K562 (cell line): ENCODE measurements at regions of chr5 and their contacts with region 1.

Region 1: DNA sequence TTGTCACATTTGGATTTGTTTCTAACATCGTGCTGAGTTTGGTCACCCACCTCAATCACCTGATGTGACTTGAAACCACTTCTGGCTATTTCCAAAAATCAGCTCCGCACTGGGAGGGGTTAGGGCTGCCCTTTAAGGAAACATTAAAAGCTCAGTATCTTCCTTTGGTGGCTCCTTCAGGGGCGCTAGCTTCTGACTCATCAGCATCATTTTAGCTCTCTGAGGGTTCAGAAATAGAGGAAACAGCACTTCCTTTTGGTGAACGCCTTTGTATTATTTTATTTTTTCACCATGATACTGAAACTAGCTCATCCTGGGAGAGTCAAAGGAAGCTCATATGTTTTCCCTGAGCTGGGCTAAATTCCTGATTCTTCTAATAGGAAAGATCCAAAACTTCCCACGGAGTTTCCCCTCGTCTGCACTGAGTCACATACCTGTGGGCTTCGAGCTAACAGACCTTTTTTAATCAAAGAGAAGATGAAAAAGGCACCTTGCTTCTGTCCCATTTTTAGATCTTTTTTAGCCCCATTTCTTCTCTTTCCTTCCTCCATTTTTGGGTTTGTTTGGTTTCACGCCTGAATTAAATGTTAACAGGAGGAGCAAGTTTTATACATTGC is 48.2 kb downstream of the ROPN1L start:
- DNase-seq: no peak
- ATAC-seq: no peak
- H3K4me3 ChIP-seq: no peak overlapping the region
- H3K27ac ChIP-seq: no peak overlapping the region
- H3K4me1 ChIP-seq: peaks cover 7 to 16% of the 10 kb centered on the region in 2 experiments
- H3K27me3 ChIP-seq: peaks cover 35 to 48% of the 10 kb centered on the region in 2 experiments
- CTCF ChIP-seq: no peak
- EP300 ChIP-seq: no peak
- POLR2A ChIP-seq: no peak
- RAD21 ChIP-seq: no peak

Region 2: GRCh38 chr5:10479226-10479721 is 10.6 kb before region 1 on chr5:
- CTCF ChIA-PET with region 1: no interaction called
- POLR2A ChIA-PET with region 1: interaction called, 11 read pairs
- in situ Hi-C with region 1: no loop called
- intact Hi-C with region 1: no loop called
- DNase-seq: no peak
- ATAC-seq: no peak
- H3K4me3 ChIP-seq: no peak overlapping the region
- H3K27ac ChIP-seq: no peak overlapping the region
- H3K4me1 ChIP-seq: no peaks in the 10 kb centered on the region
- H3K27me3 ChIP-seq: peaks cover 41 to 79% of the 10 kb centered on the region in 2 experiments
- CTCF ChIP-seq: no peak
- EP300 ChIP-seq: no peak
- POLR2A ChIP-seq: no peak
- RAD21 ChIP-seq: no peak

Region 3: GRCh38 chr5:10719965-10720364 is 230.0 kb after region 1 on chr5:
- CTCF ChIA-PET with region 1: no interaction called
- POLR2A ChIA-PET with region 1: no interaction called
- in situ Hi-C with region 1: no loop called
- intact Hi-C with region 1: no loop called
- DNase-seq: no peak
- ATAC-seq: no peak
- H3K4me3 ChIP-seq: no peak overlapping the region
- H3K27ac ChIP-seq: no peak overlapping the region
- H3K4me1 ChIP-seq: peaks cover 5 to 8% of the 10 kb centered on the region in 2 experiments; a peak in 4 of 5 replicates
- H3K27me3 ChIP-seq: no peaks in the 10 kb centered on the region
- CTCF ChIP-seq: no peak
- EP300 ChIP-seq: no peak
- POLR2A ChIP-seq: no peak
- RAD21 ChIP-seq: no peak